Gastrocnemius medialis (tissue), 4 donors: ENCODE measurements at regions of chr13 and their contacts with region 1.

Region 1: GRCh38 chr13:48769107-48769704 is 115.5 kb downstream of the CYSLTR2 start:
- DNase-seq: peak; percentile 51 to 73
- ATAC-seq: peak; percentile 97 to 99
- H3K4me3 ChIP-seq: no peak overlapping the region
- H3K27ac ChIP-seq: no peak overlapping the region
- H3K4me1 ChIP-seq: no peaks in the 10 kb centered on the region
- H3K27me3 ChIP-seq: no peaks in the 10 kb centered on the region
- CTCF ChIP-seq: peak; percentile 92 to 99 (median 93)
- POLR2A ChIP-seq: no peak

Region 2: DNA sequence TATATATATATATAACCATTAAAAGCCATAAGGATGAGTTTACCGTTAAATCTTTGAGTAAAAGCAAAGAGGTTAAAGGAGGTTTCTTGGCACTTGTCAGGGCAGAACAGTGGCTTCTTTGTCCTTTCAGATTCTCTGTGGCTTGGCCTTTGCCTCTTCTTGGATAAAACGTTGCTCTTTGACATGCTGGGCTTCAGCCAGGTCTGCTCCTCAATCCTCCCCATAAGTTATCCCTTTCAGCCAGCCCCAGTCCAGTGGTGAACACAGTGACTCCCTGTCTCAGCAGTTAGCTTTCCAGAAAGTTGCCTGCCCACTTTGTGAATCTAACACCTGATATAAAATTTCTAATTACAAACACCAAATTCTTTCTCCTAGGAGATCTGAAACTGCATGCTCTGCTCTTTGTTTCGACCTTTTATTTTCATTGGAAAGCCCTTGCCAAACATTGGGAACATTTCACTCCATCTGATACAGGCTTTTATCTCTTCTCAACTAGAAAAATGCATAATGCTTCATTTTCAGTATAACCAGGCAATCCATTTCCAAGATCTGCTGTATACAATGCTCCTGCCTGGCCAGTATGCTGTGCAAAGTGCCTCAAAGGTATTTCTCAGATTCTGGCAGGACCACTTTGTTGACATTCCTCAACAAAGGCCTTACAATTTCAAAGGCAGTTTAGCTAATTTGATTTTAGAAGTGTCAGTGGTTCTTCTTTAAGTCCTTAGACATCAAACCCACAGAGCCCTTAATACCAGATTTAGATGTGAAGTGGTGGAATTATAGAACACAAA is 658.1 kb before region 1 on chr13:
- in situ Hi-C with region 1: loop called in 1 of 4 experiments (anchors 25 kb)
- intact Hi-C with region 1: no loop called
- DNase-seq: no peak
- ATAC-seq: no peak
- H3K4me3 ChIP-seq: no peak overlapping the region
- H3K27ac ChIP-seq: peak overlapping the region; percentile 53 to 75 (median 66)
- H3K4me1 ChIP-seq: peaks cover 8 to 25% of the 10 kb centered on the region in 2 donors
- H3K27me3 ChIP-seq: no peaks in the 10 kb centered on the region
- CTCF ChIP-seq: no peak
- POLR2A ChIP-seq: no peak

Region 3: GRCh38 chr13:48126944-48127830 is 642.0 kb before region 1 on chr13:
- in situ Hi-C with region 1: loop called in 2 of 4 experiments (anchors 25 kb)
- intact Hi-C with region 1: loop called (anchors 5 kb)
- DNase-seq: peak; percentile 43 to 72
- ATAC-seq: peak; percentile 73 to 79
- H3K4me3 ChIP-seq: no peak overlapping the region
- H3K27ac ChIP-seq: peak overlapping the region; percentile 27 to 80 (median 73)
- H3K4me1 ChIP-seq: peaks cover 12 to 33% of the 10 kb centered on the region in 2 donors
- H3K27me3 ChIP-seq: no peaks in the 10 kb centered on the region
- CTCF ChIP-seq: peak; percentile 53 to 74 (median 72)
- POLR2A ChIP-seq: no peak

Region 4: GRCh38 chr13:48334534-48335127 is 434.6 kb before region 1 on chr13:
- in situ Hi-C with region 1: loop called in 2 of 4 experiments (anchors 25 kb)
- intact Hi-C with region 1: loop called (anchors 5 kb)
- DNase-seq: no peak
- ATAC-seq: peak in 1 of 2 donors; percentile 51
- H3K4me3 ChIP-seq: no peak overlapping the region
- H3K27ac ChIP-seq: no peak overlapping the region
- H3K4me1 ChIP-seq: peaks cover 4% of the 10 kb centered on the region in 2 donors
- H3K27me3 ChIP-seq: no peaks in the 10 kb centered on the region
- CTCF ChIP-seq: peak in 4 of 5 experiments; percentile 21 to 64 (median 61)
- POLR2A ChIP-seq: no peak

Region 5: GRCh38 chr13:48370815-48371214 is 398.4 kb before region 1 on chr13:
- in situ Hi-C with region 1: loop called in 1 of 4 experiments (anchors 25 kb)
- intact Hi-C with region 1: no loop called
- DNase-seq: no peak
- ATAC-seq: no peak
- H3K4me3 ChIP-seq: no peak overlapping the region
- H3K27ac ChIP-seq: peak overlapping the region in 1 of 4 donors; percentile 12
- H3K4me1 ChIP-seq: no peaks in the 10 kb centered on the region
- H3K27me3 ChIP-seq: no peaks in the 10 kb centered on the region
- CTCF ChIP-seq: no peak
- POLR2A ChIP-seq: no peak

Region 6: GRCh38 chr13:48749699-48750473 is 19.3 kb before region 1 on chr13:
- in situ Hi-C with region 1: no loop called
- intact Hi-C with region 1: loop called (anchors 1 kb)
- DNase-seq: peak; percentile 57 to 85
- ATAC-seq: peak; percentile 88 to 93
- H3K4me3 ChIP-seq: no peak overlapping the region
- H3K27ac ChIP-seq: peak overlapping the region; percentile 61 to 67 (median 64)
- H3K4me1 ChIP-seq: peaks cover 12 to 13% of the 10 kb centered on the region in 2 donors
- H3K27me3 ChIP-seq: no peaks in the 10 kb centered on the region
- CTCF ChIP-seq: peak in 4 of 5 experiments; percentile 27 to 53 (median 32)
- POLR2A ChIP-seq: no peak

Region 7: DNA sequence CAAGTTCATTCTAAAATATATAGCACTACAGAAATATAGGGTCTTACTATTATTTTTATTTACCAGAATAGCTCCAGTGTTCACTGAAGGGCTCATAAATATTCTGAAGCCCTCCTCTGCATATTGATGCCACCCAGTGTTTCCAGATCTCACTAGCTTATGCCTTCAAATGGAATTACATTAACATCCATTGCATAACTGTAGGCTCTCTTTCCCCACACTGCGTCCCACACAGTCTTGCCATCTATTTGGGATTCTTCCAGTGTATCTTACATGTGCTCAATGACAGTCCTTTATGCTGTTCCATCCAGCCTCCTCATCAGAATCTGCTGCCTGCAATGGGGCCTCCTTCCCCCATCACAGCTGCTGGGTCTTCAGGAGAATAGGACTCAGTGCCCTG is 21.8 kb after region 1 on chr13:
- in situ Hi-C with region 1: no loop called
- intact Hi-C with region 1: no loop called
- DNase-seq: no peak
- ATAC-seq: no peak
- H3K4me3 ChIP-seq: no peak overlapping the region
- H3K27ac ChIP-seq: peak overlapping the region in 1 of 4 donors; percentile 49
- H3K4me1 ChIP-seq: no peaks in the 10 kb centered on the region
- H3K27me3 ChIP-seq: no peaks in the 10 kb centered on the region
- CTCF ChIP-seq: no peak
- POLR2A ChIP-seq: no peak

Region 8: DNA sequence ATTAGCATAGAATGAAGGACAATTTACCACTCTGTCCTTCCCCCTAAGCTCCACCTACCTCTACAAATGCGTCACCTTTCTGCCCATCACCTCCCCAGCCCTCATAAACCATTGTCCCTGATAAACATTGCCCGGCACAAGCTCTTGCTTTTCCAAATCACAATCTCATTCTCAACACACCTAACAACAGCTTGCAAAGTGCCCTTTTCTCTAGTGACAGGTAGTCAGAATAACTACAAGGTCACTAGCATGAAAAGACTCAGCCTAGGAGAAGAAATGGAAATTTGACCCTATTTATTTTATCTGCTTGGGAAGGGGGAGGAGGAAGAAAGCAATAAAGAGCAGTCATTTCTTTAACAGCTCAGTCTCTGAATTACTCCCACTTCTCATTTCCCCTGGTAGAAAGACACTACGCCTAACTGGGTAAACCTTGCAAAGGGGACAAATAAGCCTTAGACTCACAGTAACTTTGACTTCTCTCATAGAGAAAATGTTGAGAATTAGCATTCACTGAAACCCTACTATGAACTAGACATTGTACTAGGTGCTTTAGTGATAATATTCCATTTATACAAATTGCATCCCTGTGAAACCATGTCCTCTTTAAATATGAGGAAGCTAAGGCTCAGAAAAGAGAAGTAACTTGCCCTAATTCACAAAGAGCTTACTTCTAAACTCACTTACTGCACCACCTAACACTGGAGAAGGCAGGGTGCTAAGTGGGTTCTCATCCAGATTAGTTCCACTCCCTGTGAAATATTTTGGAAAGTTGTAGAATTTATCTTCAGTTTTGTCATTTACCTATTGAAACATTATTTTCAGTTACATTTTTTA is 90.3 kb after region 1 on chr13:
- in situ Hi-C with region 1: no loop called
- intact Hi-C with region 1: no loop called
- DNase-seq: no peak
- ATAC-seq: no peak
- H3K4me3 ChIP-seq: no peak overlapping the region
- H3K27ac ChIP-seq: no peak overlapping the region
- H3K4me1 ChIP-seq: no peaks in the 10 kb centered on the region
- H3K27me3 ChIP-seq: no peaks in the 10 kb centered on the region
- CTCF ChIP-seq: no peak
- POLR2A ChIP-seq: no peak

Region 9: GRCh38 chr13:49098771-49099512 is 329.7 kb after region 1 on chr13:
- in situ Hi-C with region 1: no loop called
- intact Hi-C with region 1: no loop called
- DNase-seq: no peak
- ATAC-seq: peak; percentile 28 to 55
- H3K4me3 ChIP-seq: no peak overlapping the region
- H3K27ac ChIP-seq: peak overlapping the region; percentile 58 to 85 (median 76)
- H3K4me1 ChIP-seq: peaks cover 22 to 23% of the 10 kb centered on the region in 2 donors
- H3K27me3 ChIP-seq: no peaks in the 10 kb centered on the region
- CTCF ChIP-seq: peak in 3 of 5 experiments; percentile 20 to 70 (median 36)
- POLR2A ChIP-seq: no peak